Heart left ventricle (tissue), 16 donors: ENCODE measurements at regions of chr12 and their contacts with region 1.

Region 1: DNA sequence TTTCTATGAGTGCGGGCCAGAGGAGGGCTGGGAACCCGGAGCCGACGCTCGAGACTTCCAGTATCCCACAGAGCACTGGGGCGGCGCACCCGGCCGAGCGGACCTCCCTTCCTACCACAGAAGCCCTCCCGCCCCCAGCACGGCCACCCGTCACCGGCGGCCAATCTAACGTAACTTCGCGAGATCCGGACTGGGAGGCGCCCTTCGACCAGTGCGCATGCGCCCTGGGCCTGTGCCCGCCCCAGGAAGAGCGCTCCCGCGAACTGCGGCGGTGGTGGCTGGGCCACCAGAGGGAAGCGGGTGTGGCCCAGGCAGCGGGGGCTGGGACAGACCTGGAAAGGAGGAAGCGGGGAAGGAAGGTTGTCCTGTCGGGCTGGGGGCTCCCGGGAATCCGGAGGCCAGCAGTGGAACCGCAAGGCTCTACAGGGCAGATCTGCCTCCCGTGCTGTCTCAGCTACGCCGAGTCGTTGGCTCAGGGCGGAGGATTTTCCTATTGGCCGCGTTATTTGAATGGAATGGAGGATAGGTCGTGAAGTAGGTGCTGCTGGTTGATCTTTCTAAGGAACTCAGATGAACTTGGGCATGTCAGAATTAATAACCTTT is at the start of gene PPP1R12A:
- DNase-seq: peak; percentile 98 to 99 (median 98)
- ATAC-seq: peak; percentile 98
- H3K4me3 ChIP-seq: peak within 1 kb of the TSS; percentile 65 to 98 (median 90)
- H3K27ac ChIP-seq: peak within 1 kb of the TSS; percentile 95 to 99 (median 97)
- H3K4me1 ChIP-seq: peaks cover 0 to 49% (median 38%) of the 10 kb centered on the region in 12 donors
- H3K27me3 ChIP-seq: no peaks in the 10 kb centered on the region
- CTCF ChIP-seq: peak in 7 of 12 donors; percentile 6 to 42 (median 25)
- POLR2A ChIP-seq: peak; percentile 26 to 94
- total RNA-seq, gene PPP1R12A: 42.3 to 77.8 (median 54.9) TPM

Region 2: DNA sequence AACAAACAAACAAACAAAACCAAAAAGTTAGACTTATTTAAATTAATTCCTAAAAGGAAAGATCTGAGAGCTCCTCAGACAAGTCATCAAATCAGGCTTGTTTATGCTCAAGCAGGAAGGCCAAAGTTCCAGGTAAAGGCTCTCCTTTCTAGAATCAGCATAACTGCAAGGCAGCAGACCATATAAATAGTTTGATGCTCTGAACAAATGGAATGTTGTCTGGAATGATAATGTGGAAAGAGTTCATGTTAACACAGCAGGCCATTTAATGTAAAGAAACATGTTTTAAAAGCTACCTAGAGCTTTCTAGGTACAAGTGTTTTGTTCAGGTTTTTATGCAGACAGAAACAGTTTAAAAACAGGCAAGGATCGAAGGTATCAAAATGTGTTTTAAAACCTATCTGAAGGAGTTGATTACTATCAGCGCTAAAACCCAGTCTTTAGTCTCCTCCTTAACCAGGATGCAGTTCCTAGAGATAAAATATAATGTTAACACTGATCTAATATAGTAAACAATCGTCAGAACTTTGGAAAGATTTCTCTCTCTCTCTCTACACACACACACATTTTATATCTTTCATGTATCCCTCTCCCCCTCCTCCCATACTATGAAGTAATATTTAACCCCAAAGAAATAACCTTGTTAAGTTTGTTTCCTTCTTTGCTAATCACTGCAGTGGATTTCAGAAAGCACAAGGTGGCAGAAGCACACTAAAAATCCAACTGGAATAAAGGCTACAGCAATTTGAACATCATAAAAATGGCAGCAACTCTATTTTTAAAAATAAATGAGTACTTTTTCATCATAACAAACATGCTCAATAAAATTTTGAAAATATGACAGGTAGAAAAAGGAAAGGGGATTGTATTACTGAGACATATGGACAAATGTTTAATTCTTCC is 379.8 kb before region 1 on chr12:
- intact Hi-C with region 1: loop called in 1 of 10 experiments (anchors 10 kb)
- DNase-seq: no peak
- ATAC-seq: peak in 1 of 4 donors; percentile 45
- H3K4me3 ChIP-seq: no peak overlapping the region
- H3K27ac ChIP-seq: peak overlapping the region in 1 of 12 donors; percentile 38
- H3K4me1 ChIP-seq: peaks cover 0 to 45% (median 7%) of the 10 kb centered on the region in 12 donors
- H3K27me3 ChIP-seq: no peaks in the 10 kb centered on the region
- CTCF ChIP-seq: peak; percentile 31 to 80 (median 62)
- POLR2A ChIP-seq: no peak

Region 3: GRCh38 chr12:79766705-79767464 is 168.2 kb before region 1 on chr12:
- intact Hi-C with region 1: loop called in 2 of 10 experiments (anchors 5 to 10 kb)
- DNase-seq: no peak
- ATAC-seq: no peak
- H3K4me3 ChIP-seq: no peak overlapping the region
- H3K27ac ChIP-seq: no peak overlapping the region
- H3K4me1 ChIP-seq: peaks cover 0 to 12% (median 3%) of the 10 kb centered on the region in 12 donors
- H3K27me3 ChIP-seq: no peaks in the 10 kb centered on the region
- CTCF ChIP-seq: no peak
- POLR2A ChIP-seq: no peak

Region 4: DNA sequence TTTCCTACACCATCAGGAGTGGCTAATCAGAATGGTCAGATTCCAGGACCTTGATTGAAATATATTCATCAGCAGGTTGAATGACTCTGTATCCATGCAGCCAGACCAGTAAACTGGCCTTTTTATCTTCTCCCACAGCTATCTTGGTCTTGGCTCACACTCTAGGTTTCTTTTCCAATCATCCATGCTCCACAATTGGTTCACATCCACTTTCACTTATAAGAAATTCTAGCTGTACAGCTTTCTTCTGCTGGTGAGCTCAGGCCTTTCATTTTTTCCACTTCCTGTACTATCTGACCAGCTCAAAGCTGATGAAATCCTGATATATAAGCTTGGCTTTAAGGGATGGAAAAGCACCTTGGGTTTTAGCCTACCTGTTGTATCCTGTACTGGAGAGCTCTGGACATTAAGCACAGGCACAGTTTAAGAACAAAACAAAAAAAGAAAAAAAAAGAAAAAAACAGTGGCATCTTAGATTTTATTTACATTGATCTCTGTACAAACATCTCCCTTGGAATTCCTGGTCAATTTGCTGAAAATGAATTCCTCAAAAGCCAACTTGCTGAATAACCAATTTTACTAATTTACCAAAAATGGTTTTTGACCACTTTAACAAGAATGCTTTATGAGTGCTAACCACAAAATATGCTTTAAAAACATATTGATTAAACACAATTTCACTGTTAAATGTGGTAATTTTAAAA is 152.8 kb before region 1 on chr12:
- intact Hi-C with region 1: loop called in 2 of 10 experiments (anchors 10 kb)
- DNase-seq: no peak
- ATAC-seq: peak; percentile 86 to 92 (median 88)
- H3K4me3 ChIP-seq: no peak overlapping the region
- H3K27ac ChIP-seq: peak overlapping the region in 8 of 12 donors; percentile 5 to 59 (median 40)
- H3K4me1 ChIP-seq: peaks cover 0 to 13% (median 9%) of the 10 kb centered on the region in 12 donors
- H3K27me3 ChIP-seq: no peaks in the 10 kb centered on the region
- CTCF ChIP-seq: no peak
- POLR2A ChIP-seq: no peak

Region 5: GRCh38 chr12:79818856-79819255 is 116.3 kb before region 1 on chr12:
- intact Hi-C with region 1: loop called in 6 of 10 experiments (anchors 2 to 10 kb)
- DNase-seq: peak in 1 of 5 donors; percentile 37
- ATAC-seq: peak; percentile 57 to 86 (median 83)
- H3K4me3 ChIP-seq: no peak overlapping the region
- H3K27ac ChIP-seq: peak overlapping the region; percentile 50 to 84 (median 70)
- H3K4me1 ChIP-seq: peaks cover 0 to 44% (median 18%) of the 10 kb centered on the region in 12 donors
- H3K27me3 ChIP-seq: no peaks in the 10 kb centered on the region
- CTCF ChIP-seq: no peak
- POLR2A ChIP-seq: no peak

Region 6: DNA sequence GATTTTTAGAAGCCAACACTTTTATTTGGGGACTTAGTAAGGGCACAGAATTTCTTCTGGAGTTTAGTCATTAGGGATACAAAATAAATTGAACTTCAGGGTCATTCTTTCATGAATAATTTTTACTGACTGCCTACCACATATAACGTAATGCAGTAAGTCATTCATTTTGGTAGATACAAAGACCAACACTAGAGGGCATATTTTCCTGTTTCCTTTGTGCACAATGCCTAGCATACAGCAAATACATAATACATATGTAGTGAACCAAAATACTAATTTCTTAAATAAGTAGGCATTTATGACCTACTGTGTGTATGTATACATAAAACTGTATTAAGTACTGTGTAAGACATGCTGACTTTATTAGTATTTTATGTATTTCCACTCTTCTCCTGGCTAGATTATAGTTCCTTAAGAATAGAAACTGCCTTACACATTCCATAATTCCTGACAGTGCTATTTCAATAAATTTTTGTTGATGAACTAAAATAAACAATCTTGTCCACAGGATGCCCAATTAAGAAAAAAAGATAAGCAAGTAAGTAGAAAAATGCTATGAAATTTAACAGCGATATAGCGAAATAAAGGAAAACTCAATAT is 48.1 kb before region 1 on chr12:
- intact Hi-C with region 1: loop called in 3 of 10 experiments (anchors 5 kb)
- DNase-seq: no peak
- ATAC-seq: peak in 2 of 4 donors; percentile 63 to 69
- H3K4me3 ChIP-seq: no peak overlapping the region
- H3K27ac ChIP-seq: no peak overlapping the region
- H3K4me1 ChIP-seq: peaks cover 0 to 90% (median 60%) of the 10 kb centered on the region in 12 donors
- H3K27me3 ChIP-seq: no peaks in the 10 kb centered on the region
- CTCF ChIP-seq: peak; percentile 33 to 66 (median 56)
- POLR2A ChIP-seq: no peak